BJ (cell line): ENCODE measurements at regions of chr16 and their contacts with region 1.

Region 1: GRCh38 chr16:83952940-83953795 is at the start of gene OSGIN1:
- DNase-seq: peak; percentile 54
- H3K4me3 ChIP-seq: peak within 1 kb of the TSS; percentile 55
- H3K27me3 ChIP-seq: no peaks in the 10 kb centered on the region
- CTCF ChIP-seq: no peak
- polyA plus RNA-seq, gene OSGIN1: 2.0 and 5.1 TPM in 2 replicates

Region 2: GRCh38 chr16:83971165-83972130 is 18.3 kb after region 1 on chr16:
- CTCF ChIA-PET with region 1: interaction called, 11 read pairs
- POLR2A ChIA-PET with region 1: no interaction called
- DNase-seq: no peak
- H3K4me3 ChIP-seq: no peak overlapping the region
- H3K27me3 ChIP-seq: peaks cover 11% of the 10 kb centered on the region
- CTCF ChIP-seq: no peak

Region 3: DNA sequence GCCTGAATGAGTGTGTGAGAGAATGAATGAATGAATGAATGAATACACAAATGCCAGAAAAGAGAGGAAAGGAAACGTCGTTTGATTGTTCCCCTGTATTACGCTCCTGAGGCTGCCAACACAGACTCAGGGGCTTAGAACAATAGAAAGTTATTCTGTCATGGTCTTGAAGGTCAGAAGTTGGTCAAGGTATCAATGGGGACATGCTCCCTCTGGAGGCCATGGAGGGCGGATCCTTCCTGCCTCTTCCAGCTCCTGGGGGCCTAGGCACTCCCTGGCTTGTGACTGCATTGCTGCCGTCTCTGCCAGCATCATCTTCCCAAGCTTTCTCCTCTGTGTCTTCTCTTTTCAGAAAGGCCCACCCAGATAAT is 90.9 kb after region 1 on chr16:
- CTCF ChIA-PET with region 1: interaction called, 34 read pairs
- POLR2A ChIA-PET with region 1: no interaction called
- DNase-seq: no peak
- H3K4me3 ChIP-seq: no peak overlapping the region
- H3K27me3 ChIP-seq: peaks cover 26% of the 10 kb centered on the region
- CTCF ChIP-seq: peak; percentile 52